ENCODE measurements at regions of chr11 and their contacts with region 1.

Region 1: GRCh38 chr11:124415356-124415923 is 9.2 kb downstream of the OR8B4 start:
- DNase-seq: peak; percentile 66 to 82 (median 76)
- H3K4me3 ChIP-seq: no peak overlapping the region
- H3K27ac ChIP-seq: no peak overlapping the region
- H3K4me1 ChIP-seq: no peaks in the 10 kb centered on the region
- H3K27me3 ChIP-seq: peaks cover 0 to 11% (median 0%) of the 10 kb centered on the region in 5 experiments

Region 2: GRCh38 chr11:124493016-124493655 is 77.7 kb after region 1 on chr11:
- CTCF ChIA-PET with region 1: no interaction called
- POLR2A ChIA-PET with region 1: no interaction called
- DNase-seq: no peak
- H3K4me3 ChIP-seq: no peak overlapping the region
- H3K27ac ChIP-seq: no peak overlapping the region
- H3K4me1 ChIP-seq: no peaks in the 10 kb centered on the region
- H3K27me3 ChIP-seq: peaks cover 0 to 7% (median 2%) of the 10 kb centered on the region in 5 experiments

Region 3: GRCh38 chr11:124586238-124586860 is 170.9 kb after region 1 on chr11:
- CTCF ChIA-PET with region 1: interaction called, 57 read pairs
- POLR2A ChIA-PET with region 1: no interaction called
- DNase-seq: peak; percentile 58 to 79 (median 69)
- H3K4me3 ChIP-seq: no peak overlapping the region
- H3K27ac ChIP-seq: no peak overlapping the region
- H3K4me1 ChIP-seq: no peaks in the 10 kb centered on the region
- H3K27me3 ChIP-seq: peaks cover 0 to 2% (median 0%) of the 10 kb centered on the region in 5 experiments